ENCODE measurements at regions of chr7 and their contacts with region 1.

Region 1: GRCh38 chr7:23597094-23598091 is at the start of gene CCDC126:
- DNase-seq: peak; percentile 98
- total RNA-seq, gene CCDC126: 10.1 TPM

Region 2: DNA sequence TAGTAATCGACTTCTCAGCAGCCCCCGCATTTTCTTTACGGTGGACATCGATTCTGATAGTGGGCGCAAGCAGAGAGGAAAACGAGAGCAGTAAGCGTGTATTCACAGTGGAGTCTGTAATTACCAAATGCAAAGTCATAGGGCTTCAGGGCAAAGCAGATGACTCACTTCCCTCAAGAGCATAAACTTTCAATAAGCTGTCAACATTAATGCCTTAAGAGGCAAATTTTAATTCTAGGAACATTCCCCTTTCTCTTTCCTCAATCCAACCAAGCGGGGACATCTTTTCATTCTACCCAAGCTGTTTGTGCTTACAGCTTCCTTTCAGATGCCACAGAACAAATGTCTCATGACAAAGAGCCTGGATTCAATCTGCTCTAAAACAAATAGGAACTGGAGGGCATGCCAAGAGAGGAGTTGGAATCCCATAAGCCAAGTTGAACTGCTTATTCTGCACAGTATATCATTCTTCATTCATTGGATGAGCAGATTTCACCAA is 249.7 kb before region 1 on chr7:
- intact Hi-C with region 1: no loop called
- DNase-seq: no peak

Region 3: DNA sequence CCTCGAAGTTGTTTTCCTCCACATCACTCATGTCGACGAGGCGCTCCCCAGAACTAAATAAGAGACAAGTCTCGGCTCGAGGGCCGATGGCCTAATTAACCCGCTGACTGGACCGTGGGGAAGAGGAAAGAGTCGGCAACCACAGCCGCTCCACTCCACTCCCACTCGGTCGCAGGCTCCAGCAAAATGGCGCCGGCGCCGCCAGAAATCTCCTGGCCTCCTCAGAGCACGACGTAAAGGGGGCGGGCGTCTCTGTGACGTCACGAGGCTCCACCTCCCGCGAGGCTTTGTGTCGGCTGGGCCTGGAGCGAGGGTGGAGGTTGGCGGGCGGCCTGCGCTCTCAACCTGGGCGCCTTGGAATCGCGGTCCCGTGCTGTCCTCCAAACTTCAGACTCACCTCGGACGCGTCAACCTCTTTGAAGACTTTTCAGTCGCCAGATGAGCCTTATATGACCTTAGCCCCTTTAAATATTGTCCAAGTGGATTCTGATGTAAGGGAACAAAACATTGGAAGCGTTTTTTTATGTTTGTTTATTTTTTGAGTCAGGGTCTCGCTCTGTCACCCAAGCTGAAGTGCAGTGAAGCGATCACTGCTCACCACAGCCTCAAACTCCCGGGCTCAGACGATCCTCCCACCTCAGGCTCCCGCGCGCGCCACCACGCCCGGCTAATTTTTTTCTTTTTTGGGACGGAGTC is 65.5 kb before region 1 on chr7 and contains the start of gene TRA2A:
- intact Hi-C with region 1: loop called (anchors 5 kb)
- DNase-seq: peak; percentile 99
- total RNA-seq, gene TRA2A: 32.6 TPM

Region 4: GRCh38 chr7:23679898-23680413 is 82.6 kb after region 1 on chr7 and contains the start of gene FAM221A:
- intact Hi-C with region 1: loop called (anchors 1 kb)
- DNase-seq: peak; percentile 94
- total RNA-seq, gene FAM221A: 3.7 TPM

Region 5: DNA sequence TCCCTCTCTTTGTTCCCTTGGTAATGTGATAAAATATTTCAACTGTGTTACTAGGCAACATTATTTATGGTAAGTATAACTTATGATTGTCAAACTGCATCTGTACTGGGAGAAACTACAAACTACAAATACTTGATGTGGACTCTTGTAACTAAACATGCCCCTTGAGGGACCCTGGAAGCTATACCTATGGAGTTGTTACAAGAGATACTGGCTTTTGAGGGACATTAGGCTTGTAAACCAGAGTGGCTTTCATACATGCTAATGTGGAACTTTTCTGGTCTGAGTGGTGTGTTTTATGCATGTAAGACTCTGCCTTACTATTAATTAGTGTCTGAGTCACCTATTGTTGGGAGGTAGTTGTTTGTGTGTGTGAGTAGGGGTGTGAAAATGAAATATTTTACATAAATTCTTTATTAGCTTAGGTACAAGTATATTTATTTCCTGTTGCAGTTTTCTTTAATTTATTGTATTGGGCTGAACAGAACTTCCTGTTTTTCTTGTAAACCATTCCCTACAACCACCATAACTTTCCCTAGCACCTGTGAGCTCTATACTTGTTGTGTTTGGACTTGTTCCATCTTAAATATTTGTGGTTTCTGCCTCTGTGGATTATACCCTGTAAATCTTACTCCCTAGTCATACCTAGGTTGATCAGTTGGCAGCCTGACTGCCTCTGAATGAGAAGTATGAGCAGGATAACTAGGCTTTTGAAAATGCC is 162.4 kb after region 1 on chr7:
- intact Hi-C with region 1: no loop called
- DNase-seq: no peak

Measured in cardiac septum (tissue), 1 donor.